ENCODE measurements at regions of chr7 and their contacts with region 1.

Region 1: DNA sequence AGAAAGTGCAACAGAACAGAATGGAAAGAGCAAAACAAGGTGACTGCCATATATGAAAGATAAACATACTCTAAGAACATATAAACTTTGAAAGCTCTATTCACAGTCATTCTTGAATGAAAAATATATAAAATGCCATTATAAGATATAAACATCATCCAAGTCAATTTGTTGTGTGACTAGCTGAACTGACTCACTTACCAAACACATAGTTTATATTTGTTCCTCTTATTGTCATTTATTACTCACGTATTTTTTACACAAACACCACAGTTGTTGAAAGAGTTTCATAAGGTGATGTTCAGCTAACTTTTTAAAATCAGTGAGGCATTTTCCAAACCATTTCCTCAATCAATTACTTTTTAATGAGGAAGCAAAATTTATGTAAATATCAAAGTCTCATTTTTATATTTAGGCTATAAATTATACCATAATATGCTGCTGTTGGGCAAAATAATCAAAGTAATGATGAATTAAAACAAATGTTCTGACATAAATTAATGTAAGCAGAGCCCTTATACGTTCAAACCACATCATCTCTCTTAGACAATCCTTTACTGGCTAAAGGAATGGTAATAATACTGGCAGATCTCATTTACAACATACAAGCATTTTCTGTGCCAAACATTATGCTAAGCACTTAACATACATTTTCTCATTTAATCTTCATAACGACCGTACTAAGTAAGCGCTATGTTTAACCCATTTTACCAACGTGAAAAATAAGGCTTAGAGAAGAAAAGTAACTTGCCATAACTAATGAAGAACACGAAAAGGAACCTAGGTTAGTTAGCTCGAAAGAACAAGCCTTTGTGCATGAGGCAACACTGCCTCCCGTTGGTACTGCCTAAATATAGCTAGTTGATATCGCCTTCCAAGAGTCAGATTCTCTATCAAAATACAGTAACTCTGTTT is 7.3 kb downstream of the LRRN3 start:
- DNase-seq: peak; percentile 28 to 81 (median 64)
- ATAC-seq: peak; percentile 95
- H3K4me3 ChIP-seq: no peak overlapping the region
- H3K4me3 Mint-ChIP-seq: peak overlapping the region; percentile 74
- H3K27ac ChIP-seq: no peak overlapping the region
- H3K27ac Mint-ChIP-seq: peak overlapping the region; percentile 84
- H3K4me1 ChIP-seq: peaks cover 44% of the 10 kb centered on the region
- H3K4me1 Mint-ChIP-seq: peaks cover 59% of the 10 kb centered on the region
- H3K27me3 ChIP-seq: no peaks in the 10 kb centered on the region
- H3K27me3 Mint-ChIP-seq: no peaks in the 10 kb centered on the region
- CTCF ChIP-seq: peak; percentile 88

Region 2: GRCh38 chr7:109844362-109844761 is 1253.9 kb before region 1 on chr7:
- CTCF ChIA-PET with region 1: no interaction called
- POLR2A ChIA-PET with region 1: no interaction called
- intact Hi-C with region 1: loop called in 1 of 2 experiments (anchors 5 kb)
- DNase-seq: peak in 2 of 9 experiments; percentile 4 to 40
- ATAC-seq: no peak
- H3K4me3 ChIP-seq: no peak overlapping the region
- H3K4me3 Mint-ChIP-seq: no peak overlapping the region
- H3K27ac ChIP-seq: no peak overlapping the region
- H3K27ac Mint-ChIP-seq: no peak overlapping the region
- H3K4me1 ChIP-seq: no peaks in the 10 kb centered on the region
- H3K4me1 Mint-ChIP-seq: no peaks in the 10 kb centered on the region
- H3K27me3 ChIP-seq: no peaks in the 10 kb centered on the region
- H3K27me3 Mint-ChIP-seq: no peaks in the 10 kb centered on the region
- CTCF ChIP-seq: peak; percentile 22

Region 3: DNA sequence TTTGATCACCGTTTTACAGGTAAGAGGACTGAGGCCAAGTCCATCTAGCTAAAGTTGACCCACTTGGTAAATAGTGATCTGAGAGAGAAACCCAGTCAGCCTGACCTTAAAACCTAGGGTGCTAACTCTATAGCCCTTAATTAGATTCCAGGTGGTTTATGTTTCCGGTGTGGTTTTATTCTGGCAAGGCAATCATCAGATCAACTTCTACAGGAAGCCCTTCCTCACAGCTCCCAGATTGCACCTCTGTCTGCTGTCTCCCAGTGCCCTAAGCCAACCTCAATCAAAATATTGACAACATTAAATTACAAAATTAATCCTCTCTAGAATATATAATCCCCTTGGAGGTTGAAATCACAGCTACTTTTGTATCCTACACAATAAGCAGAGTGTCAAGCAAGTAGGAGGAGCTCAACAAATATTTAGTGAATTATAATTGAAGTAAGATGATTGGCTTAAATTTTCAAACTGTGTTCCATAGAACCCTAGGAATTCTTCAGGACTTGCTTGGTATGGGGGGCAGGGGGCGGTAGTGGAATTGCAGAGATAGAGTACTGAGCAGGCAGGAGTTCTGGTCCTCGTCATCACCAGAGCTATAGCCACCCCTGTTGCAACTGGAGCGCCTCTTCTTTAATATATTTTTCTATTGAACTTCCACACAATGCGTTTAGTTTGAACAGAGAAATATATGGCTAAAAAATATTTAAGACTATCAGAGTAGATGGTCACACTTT is 700.2 kb before region 1 on chr7:
- CTCF ChIA-PET with region 1: no interaction called
- POLR2A ChIA-PET with region 1: no interaction called
- intact Hi-C with region 1: loop called in 1 of 2 experiments (anchors 10 kb)
- DNase-seq: no peak
- ATAC-seq: no peak
- H3K4me3 ChIP-seq: no peak overlapping the region
- H3K4me3 Mint-ChIP-seq: no peak overlapping the region
- H3K27ac ChIP-seq: no peak overlapping the region
- H3K27ac Mint-ChIP-seq: no peak overlapping the region
- H3K4me1 ChIP-seq: no peaks in the 10 kb centered on the region
- H3K4me1 Mint-ChIP-seq: no peaks in the 10 kb centered on the region
- H3K27me3 ChIP-seq: no peaks in the 10 kb centered on the region
- H3K27me3 Mint-ChIP-seq: no peaks in the 10 kb centered on the region
- CTCF ChIP-seq: no peak

Region 4: GRCh38 chr7:110590415-110590814 is 507.9 kb before region 1 on chr7:
- CTCF ChIA-PET with region 1: interaction called, 28 read pairs
- POLR2A ChIA-PET with region 1: interaction called, 5 read pairs
- intact Hi-C with region 1: loop called (anchors 1 to 2 kb)
- DNase-seq: peak in 3 of 9 experiments; percentile 16 to 25 (median 17)
- ATAC-seq: no peak
- H3K4me3 ChIP-seq: no peak overlapping the region
- H3K4me3 Mint-ChIP-seq: no peak overlapping the region
- H3K27ac ChIP-seq: no peak overlapping the region
- H3K27ac Mint-ChIP-seq: no peak overlapping the region
- H3K4me1 ChIP-seq: no peaks in the 10 kb centered on the region
- H3K4me1 Mint-ChIP-seq: no peaks in the 10 kb centered on the region
- H3K27me3 ChIP-seq: no peaks in the 10 kb centered on the region
- H3K27me3 Mint-ChIP-seq: no peaks in the 10 kb centered on the region
- CTCF ChIP-seq: no peak

Region 5: DNA sequence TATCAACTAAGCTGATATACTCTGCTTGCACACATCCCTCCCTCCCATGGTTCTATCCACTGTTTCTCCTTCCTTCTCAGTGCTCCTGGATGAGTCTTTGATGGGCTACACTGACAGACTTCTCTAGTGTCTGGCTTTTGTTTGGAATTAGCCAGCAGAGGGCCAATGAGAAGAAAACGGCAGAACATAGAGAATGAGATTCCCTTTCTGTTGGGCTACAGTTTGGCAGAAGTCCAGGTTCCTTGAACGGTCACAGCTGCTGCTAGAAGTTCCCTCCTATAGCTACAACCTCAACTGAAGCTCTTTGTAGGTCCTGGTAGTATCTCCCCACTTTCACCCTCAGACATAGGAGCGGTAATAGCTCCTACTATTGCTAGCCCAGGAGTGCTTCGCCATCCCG is 258.4 kb before region 1 on chr7:
- CTCF ChIA-PET with region 1: no interaction called
- POLR2A ChIA-PET with region 1: no interaction called
- intact Hi-C with region 1: loop called in 1 of 2 experiments (anchors 5 kb)
- DNase-seq: peak in 1 of 9 experiments; percentile 7
- ATAC-seq: no peak
- H3K4me3 ChIP-seq: no peak overlapping the region
- H3K4me3 Mint-ChIP-seq: no peak overlapping the region
- H3K27ac ChIP-seq: no peak overlapping the region
- H3K27ac Mint-ChIP-seq: no peak overlapping the region
- H3K4me1 ChIP-seq: peaks cover 7% of the 10 kb centered on the region
- H3K4me1 Mint-ChIP-seq: peaks cover 9% of the 10 kb centered on the region
- H3K27me3 ChIP-seq: no peaks in the 10 kb centered on the region
- H3K27me3 Mint-ChIP-seq: no peaks in the 10 kb centered on the region
- CTCF ChIP-seq: no peak

Region 6: GRCh38 chr7:111486472-111487142 is 388.3 kb after region 1 on chr7:
- CTCF ChIA-PET with region 1: no interaction called
- POLR2A ChIA-PET with region 1: no interaction called
- intact Hi-C with region 1: loop called (anchors 2 to 10 kb)
- DNase-seq: peak in 2 of 9 experiments; percentile 39 to 54
- ATAC-seq: no peak
- H3K4me3 ChIP-seq: no peak overlapping the region
- H3K4me3 Mint-ChIP-seq: no peak overlapping the region
- H3K27ac ChIP-seq: no peak overlapping the region
- H3K27ac Mint-ChIP-seq: no peak overlapping the region
- H3K4me1 ChIP-seq: no peaks in the 10 kb centered on the region
- H3K4me1 Mint-ChIP-seq: no peaks in the 10 kb centered on the region
- H3K27me3 ChIP-seq: no peaks in the 10 kb centered on the region
- H3K27me3 Mint-ChIP-seq: no peaks in the 10 kb centered on the region
- CTCF ChIP-seq: peak; percentile 75

Region 7: GRCh38 chr7:111735661-111736551 is 637.6 kb after region 1 on chr7:
- CTCF ChIA-PET with region 1: interaction called, 3 read pairs
- POLR2A ChIA-PET with region 1: no interaction called
- intact Hi-C with region 1: loop called (anchors 5 kb)
- DNase-seq: peak in 8 of 9 experiments; percentile 8 to 70 (median 56)
- ATAC-seq: peak; percentile 54
- H3K4me3 ChIP-seq: no peak overlapping the region
- H3K4me3 Mint-ChIP-seq: no peak overlapping the region
- H3K27ac ChIP-seq: no peak overlapping the region
- H3K27ac Mint-ChIP-seq: no peak overlapping the region
- H3K4me1 ChIP-seq: no peaks in the 10 kb centered on the region
- H3K4me1 Mint-ChIP-seq: no peaks in the 10 kb centered on the region
- H3K27me3 ChIP-seq: no peaks in the 10 kb centered on the region
- H3K27me3 Mint-ChIP-seq: peaks cover 5% of the 10 kb centered on the region
- CTCF ChIP-seq: peak; percentile 93

Measured in CD8-positive, alpha-beta T cell (primary cell).